AG04449 (cell line): ENCODE measurements at regions of chr1 and their contacts with region 1.

Region 1: GRCh38 chr1:210394281-210394821 is 65.6 kb downstream of the HHAT start:
- DNase-seq: no peak
- H3K4me3 ChIP-seq: no peak overlapping the region
- CTCF ChIP-seq: no peak

Region 2: GRCh38 chr1:210280221-210280620 is 114.1 kb before region 1 on chr1:
- CTCF ChIA-PET with region 1: no interaction called
- POLR2A ChIA-PET with region 1: no interaction called
- DNase-seq: no peak
- H3K4me3 ChIP-seq: no peak overlapping the region
- CTCF ChIP-seq: no peak

Region 3: GRCh38 chr1:210438928-210439809 is 44.8 kb after region 1 on chr1:
- CTCF ChIA-PET with region 1: interaction called, 3 read pairs
- POLR2A ChIA-PET with region 1: interaction called, 10 read pairs
- DNase-seq: peak; percentile 100
- H3K4me3 ChIP-seq: no peak overlapping the region
- CTCF ChIP-seq: no peak